Ovary (tissue), 10 donors: ENCODE measurements at regions of chr12 and their contacts with region 1.

Region 1: DNA sequence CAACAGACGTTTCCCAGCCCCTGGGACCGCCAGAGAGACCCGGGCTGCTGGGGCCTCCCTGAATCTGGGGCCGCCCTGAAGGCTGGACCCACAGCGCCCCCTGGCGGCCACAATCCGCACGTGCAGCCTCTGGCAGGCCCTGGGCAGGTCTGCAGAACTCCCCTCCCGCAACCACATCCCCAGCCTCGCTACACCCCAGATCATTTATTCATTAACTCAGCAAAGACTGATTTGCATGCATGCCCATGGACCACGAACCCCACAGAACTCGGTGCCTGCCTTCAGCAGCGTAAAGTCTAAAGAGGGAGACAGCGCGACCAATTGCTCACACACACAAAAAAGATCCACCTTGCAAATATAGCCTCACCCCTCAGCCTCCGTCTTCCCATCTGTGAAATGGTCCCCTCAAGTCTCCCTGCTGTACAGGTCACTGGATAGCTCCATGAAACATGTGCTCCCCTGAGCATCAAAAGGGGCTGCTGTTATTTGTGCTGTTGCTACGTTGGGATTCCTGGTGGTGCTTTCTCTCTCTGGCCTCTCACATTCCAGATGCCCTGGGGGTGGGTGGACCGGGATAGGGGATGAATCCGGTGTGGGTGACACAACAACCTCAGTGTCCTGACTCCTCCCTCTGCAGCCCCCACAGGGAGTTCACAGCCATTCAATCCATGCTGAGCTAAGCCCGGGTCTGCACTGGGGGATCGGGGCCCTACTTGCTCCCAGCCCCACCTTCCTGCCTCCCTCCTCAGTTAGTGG is 96.4 kb downstream of the SCARB1 start:
- DNase-seq: peak; percentile 74 to 90 (median 86)
- H3K4me3 ChIP-seq: no peak overlapping the region
- H3K27ac ChIP-seq: peak overlapping the region in 1 of 2 donors; percentile 58
- H3K4me1 ChIP-seq: peaks cover 12% of the 10 kb centered on the region
- H3K27me3 ChIP-seq: no peaks in the 10 kb centered on the region
- CTCF ChIP-seq: peak; percentile 96 to 98 (median 98)
- EP300 ChIP-seq: no peak
- POLR2A ChIP-seq: no peak

Region 2: GRCh38 chr12:124036674-124037109 is 730.6 kb before region 1 on chr12:
- intact Hi-C with region 1: loop called (anchors 2 to 5 kb)
- DNase-seq: peak in 4 of 5 donors; percentile 62 to 72 (median 66)
- H3K4me3 ChIP-seq: no peak overlapping the region
- H3K27ac ChIP-seq: no peak overlapping the region
- H3K4me1 ChIP-seq: no peaks in the 10 kb centered on the region
- H3K27me3 ChIP-seq: no peaks in the 10 kb centered on the region
- CTCF ChIP-seq: peak; percentile 85 to 89 (median 89)
- EP300 ChIP-seq: no peak
- POLR2A ChIP-seq: no peak

Region 3: DNA sequence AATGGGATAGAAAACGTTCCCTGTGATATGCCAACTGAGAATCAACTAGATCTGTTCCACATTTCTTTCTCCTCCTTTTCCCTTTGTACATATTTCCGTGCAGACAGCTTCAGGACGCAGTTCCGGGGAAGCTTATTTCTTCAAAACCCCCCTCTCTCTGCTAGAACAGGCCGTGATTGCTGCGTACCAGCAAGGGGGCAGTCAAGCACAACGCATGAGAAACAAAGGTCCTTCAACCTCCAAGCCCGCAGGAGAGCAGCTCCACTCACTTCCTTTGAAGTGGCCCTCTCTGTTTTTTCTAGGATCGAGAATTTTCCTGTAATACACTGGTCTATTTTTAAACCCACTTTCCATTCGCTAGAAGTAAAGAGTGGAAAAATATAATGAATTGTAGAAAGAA is 713.4 kb before region 1 on chr12:
- intact Hi-C with region 1: loop called in 2 of 4 experiments (anchors 5 kb)
- DNase-seq: peak; percentile 73 to 79 (median 78)
- H3K4me3 ChIP-seq: no peak overlapping the region
- H3K27ac ChIP-seq: no peak overlapping the region
- H3K4me1 ChIP-seq: no peaks in the 10 kb centered on the region
- H3K27me3 ChIP-seq: no peaks in the 10 kb centered on the region
- CTCF ChIP-seq: peak; percentile 39 to 81 (median 78)
- EP300 ChIP-seq: no peak
- POLR2A ChIP-seq: no peak

Region 4: GRCh38 chr12:124347716-124348357 is 419.4 kb before region 1 on chr12:
- intact Hi-C with region 1: loop called in 2 of 4 experiments (anchors 2 to 10 kb)
- DNase-seq: no peak
- H3K4me3 ChIP-seq: no peak overlapping the region
- H3K27ac ChIP-seq: no peak overlapping the region
- H3K4me1 ChIP-seq: peaks cover 3% of the 10 kb centered on the region
- H3K27me3 ChIP-seq: no peaks in the 10 kb centered on the region
- CTCF ChIP-seq: peak in 2 of 3 donors; percentile 43 to 53
- EP300 ChIP-seq: no peak
- POLR2A ChIP-seq: no peak

Region 5: DNA sequence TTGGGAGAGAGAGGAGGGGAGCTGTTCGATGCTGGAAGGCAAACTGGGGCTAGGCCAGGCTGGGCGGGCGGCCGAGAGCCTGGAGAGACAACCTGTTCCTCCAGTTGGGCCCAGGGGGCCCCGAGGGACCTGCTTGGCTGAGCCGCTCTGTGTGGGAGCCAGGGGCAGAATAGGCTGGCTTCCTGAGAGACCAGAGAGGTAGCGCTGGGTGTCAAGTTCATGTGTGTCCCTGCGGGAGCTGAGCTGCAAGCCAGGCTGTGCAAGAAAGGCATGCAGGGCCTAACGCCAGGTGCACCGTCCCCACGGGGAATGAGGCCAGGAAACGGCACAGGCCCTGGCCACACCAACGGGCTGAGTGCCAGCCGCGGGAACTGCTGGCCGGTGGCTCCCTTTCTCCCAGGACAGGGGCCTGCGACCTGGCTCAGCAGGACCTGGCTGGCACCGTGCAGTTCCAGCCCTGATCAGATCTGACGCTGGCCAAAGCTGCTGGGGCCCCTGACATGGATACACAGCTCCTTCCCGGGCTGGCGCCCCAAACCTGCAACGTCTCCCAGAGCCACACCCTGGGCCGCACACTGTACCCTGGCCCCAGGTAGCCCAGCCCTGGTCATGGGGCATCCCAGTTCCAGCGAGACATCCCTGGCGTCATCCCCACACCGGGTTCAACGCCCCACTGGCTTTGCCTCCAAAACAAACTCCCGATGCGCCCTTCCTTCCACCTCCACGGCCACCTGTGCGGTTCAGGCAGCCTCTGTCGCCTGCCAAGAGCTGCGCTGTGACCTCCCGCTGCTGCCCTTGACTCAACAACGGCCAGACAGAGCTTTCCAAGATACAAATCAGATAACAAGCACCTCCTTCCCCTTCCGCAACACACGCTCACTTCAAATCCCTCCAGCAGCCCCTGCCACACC is 407.3 kb before region 1 on chr12:
- intact Hi-C with region 1: loop called in 1 of 4 experiments (anchors 10 kb)
- DNase-seq: peak; percentile 85 to 97 (median 89)
- H3K4me3 ChIP-seq: no peak overlapping the region
- H3K27ac ChIP-seq: peak overlapping the region in 1 of 2 donors; percentile 16
- H3K4me1 ChIP-seq: peaks cover 7% of the 10 kb centered on the region
- H3K27me3 ChIP-seq: no peaks in the 10 kb centered on the region
- CTCF ChIP-seq: peak in 1 of 3 donors; percentile 7
- EP300 ChIP-seq: no peak
- POLR2A ChIP-seq: no peak

Region 6: GRCh38 chr12:124379938-124380754 is 387.1 kb before region 1 on chr12:
- intact Hi-C with region 1: loop called in 3 of 4 experiments (anchors 5 to 10 kb)
- DNase-seq: peak; percentile 77 to 88 (median 85)
- H3K4me3 ChIP-seq: no peak overlapping the region
- H3K27ac ChIP-seq: peak overlapping the region; percentile 47 to 93
- H3K4me1 ChIP-seq: peaks cover 18% of the 10 kb centered on the region
- H3K27me3 ChIP-seq: no peaks in the 10 kb centered on the region
- CTCF ChIP-seq: peak; percentile 57 to 90 (median 81)
- EP300 ChIP-seq: no peak
- POLR2A ChIP-seq: no peak

Region 7: DNA sequence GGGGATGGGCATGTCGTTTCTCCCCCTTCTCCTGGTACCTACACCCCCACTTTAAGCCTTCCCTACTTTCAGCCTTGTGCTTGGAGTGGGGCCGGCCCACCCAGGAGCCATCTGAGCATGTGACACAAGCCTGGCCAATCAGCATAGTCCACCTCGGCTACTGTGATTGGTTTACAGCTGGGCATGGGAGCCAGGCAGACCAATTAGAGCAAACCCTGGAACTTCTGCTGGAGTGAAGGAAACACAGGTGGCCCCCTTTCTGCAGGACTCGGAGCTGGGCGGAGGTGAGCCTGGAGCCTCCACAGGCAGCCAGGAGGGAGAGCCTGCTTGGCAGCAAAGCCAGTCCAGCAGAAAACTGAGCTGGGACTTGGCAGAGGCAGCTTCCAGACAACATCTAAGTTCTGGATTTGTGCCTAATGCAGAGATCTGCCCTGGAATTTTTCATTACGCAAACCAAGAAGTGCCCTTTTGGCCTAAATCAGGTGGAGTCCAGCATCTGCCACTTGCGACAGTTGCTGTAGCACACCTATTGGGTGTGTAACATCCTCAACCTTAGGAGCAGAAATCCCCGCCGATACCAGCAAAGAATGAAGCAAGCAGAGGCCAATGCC is 36.9 kb after region 1 on chr12:
- intact Hi-C with region 1: no loop called
- DNase-seq: peak in 2 of 5 donors; percentile 30 to 60
- H3K4me3 ChIP-seq: no peak overlapping the region
- H3K27ac ChIP-seq: no peak overlapping the region
- H3K4me1 ChIP-seq: no peaks in the 10 kb centered on the region
- H3K27me3 ChIP-seq: no peaks in the 10 kb centered on the region
- CTCF ChIP-seq: no peak
- EP300 ChIP-seq: no peak
- POLR2A ChIP-seq: no peak

Region 8: DNA sequence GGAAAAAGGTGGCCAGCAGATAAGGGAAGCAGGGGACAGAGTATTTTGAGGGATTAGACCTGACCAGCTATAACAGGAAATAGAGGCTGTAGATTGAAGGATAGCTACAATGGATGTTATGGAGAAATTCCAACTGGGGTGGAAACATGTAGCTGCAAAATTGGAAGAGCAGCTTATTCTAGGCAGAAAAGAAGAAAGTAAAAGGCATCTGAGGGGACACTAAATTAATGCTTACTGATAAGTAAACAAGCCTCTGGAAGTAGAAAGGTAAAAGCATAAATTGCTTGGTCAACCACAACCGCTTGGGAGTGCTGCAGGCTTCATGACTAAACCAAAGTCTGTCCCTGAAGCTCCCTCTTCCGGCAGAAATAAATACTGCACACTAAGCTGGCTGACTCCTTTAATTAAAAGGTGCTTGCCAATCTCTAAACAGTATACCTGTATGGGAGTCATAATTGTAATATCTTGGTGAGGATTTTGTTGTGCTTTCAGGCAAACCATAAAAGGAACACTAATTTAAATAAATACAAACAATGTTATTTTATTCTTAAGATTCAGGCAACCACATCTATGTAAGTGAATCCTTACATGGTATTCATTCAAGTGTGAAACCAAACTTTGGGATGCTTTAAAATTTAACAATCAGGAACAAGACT is 139.5 kb after region 1 on chr12:
- intact Hi-C with region 1: loop called in 1 of 4 experiments (anchors 10 kb)
- DNase-seq: peak; percentile 74 to 93 (median 81)
- H3K4me3 ChIP-seq: no peak overlapping the region
- H3K27ac ChIP-seq: no peak overlapping the region
- H3K4me1 ChIP-seq: peaks cover 7% of the 10 kb centered on the region
- H3K27me3 ChIP-seq: no peaks in the 10 kb centered on the region
- CTCF ChIP-seq: peak; percentile 88 to 97 (median 96)
- EP300 ChIP-seq: no peak
- POLR2A ChIP-seq: no peak